WTC11 (cell line): ENCODE measurements at regions of chr3 and their contacts with region 1.

Region 1: DNA sequence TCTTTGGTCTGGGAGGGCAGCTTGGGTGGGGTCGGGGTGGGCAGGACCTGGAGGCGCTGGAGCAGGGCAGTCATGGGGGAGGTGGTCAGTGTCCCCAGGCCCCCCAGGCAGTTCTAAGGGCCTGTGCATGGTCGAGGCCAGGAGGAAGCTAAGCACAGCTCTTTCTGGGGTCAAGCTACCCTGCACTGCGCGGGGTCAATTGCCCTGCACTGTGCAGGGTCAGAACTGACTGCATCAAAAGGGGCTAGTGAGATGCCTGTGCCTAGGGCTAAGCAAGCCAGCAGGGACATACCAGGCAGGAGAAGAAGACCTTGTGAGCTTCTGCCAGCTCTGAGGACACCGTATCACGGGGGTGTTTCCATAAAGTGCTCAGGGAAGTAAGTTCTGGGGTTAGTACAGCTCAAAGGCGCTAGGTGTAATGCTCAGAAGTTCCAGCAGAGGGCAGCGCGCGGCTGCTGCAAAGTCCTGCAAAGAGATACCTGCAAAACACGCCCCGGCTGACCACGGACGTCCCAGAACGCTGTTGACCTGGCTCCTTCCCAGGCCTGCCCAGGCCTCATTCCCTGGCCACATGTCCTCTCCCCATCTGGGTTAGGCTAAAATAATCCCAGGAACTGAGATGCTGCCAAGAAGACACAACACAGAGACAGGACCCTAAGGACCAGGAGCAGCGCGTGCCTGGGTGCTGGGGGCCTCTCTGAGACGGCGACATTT is 18.8 kb upstream of the IQSEC1 start:
- DNase-seq: peak; percentile 92
- ATAC-seq: peak; percentile 84
- H3K4me3 Mint-ChIP-seq: no peak overlapping the region
- H3K27ac Mint-ChIP-seq: no peak overlapping the region
- H3K4me1 Mint-ChIP-seq: peaks cover 21% of the 10 kb centered on the region
- H3K27me3 Mint-ChIP-seq: no peaks in the 10 kb centered on the region
- CTCF ChIP-seq: peak; percentile 99

Region 2: DNA sequence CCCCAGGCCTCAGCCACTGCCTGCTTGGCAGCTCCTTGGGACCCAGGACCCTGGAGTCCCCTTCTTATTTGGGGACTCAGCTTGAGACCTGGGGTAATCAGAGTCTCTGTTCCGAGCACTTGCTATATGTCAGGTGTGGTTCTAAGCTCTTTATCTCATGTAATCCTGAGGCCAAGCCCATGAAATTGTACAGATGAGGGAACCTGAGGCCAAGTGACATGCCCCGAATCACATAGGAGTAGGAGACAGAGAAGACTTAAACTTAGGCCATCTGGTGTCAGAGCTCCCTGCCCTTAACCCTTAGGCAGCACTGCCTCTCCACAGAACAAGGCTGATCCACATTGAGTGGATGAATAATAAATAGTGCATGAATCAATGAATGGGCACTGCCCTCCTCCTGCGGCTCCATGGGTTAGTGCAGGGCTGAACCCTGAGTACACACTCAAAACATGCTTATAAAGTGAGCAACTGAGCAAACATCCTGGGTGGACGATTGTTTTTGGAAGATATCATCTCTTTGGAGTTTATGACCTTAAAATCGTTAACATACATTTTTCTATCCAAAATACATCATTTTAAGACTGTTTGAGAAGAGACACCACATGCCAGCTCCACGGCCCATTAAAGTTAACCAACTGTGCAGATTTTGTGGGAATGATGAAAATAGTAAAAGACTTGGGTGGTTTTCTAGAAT is 14.4 kb after region 1 on chr3:
- CTCF ChIA-PET with region 1: interaction called, 37 read pairs
- POLR2A ChIA-PET with region 1: no interaction called
- DNase-seq: no peak
- ATAC-seq: no peak
- H3K4me3 Mint-ChIP-seq: no peak overlapping the region
- H3K27ac Mint-ChIP-seq: no peak overlapping the region
- H3K4me1 Mint-ChIP-seq: 0 out of 2 replicates have a peak, but pooled peaks cover 6% of the 10 kb centered on the region
- H3K27me3 Mint-ChIP-seq: no peaks in the 10 kb centered on the region
- CTCF ChIP-seq: no peak

Region 3: GRCh38 chr3:13141991-13142412 is 49.9 kb after region 1 on chr3:
- CTCF ChIA-PET with region 1: interaction called, 22 read pairs
- POLR2A ChIA-PET with region 1: no interaction called
- DNase-seq: peak; percentile 84
- ATAC-seq: peak; percentile 92
- H3K4me3 Mint-ChIP-seq: no peak overlapping the region
- H3K27ac Mint-ChIP-seq: no peak overlapping the region
- H3K4me1 Mint-ChIP-seq: peaks cover 6% of the 10 kb centered on the region
- H3K27me3 Mint-ChIP-seq: no peaks in the 10 kb centered on the region
- CTCF ChIP-seq: no peak

Region 4: GRCh38 chr3:13229273-13229949 is 137.4 kb after region 1 on chr3:
- CTCF ChIA-PET with region 1: interaction called, 27 read pairs
- POLR2A ChIA-PET with region 1: no interaction called
- DNase-seq: peak; percentile 65
- ATAC-seq: peak; percentile 99
- H3K4me3 Mint-ChIP-seq: no peak overlapping the region
- H3K27ac Mint-ChIP-seq: no peak overlapping the region
- H3K4me1 Mint-ChIP-seq: peaks cover 24% of the 10 kb centered on the region
- H3K27me3 Mint-ChIP-seq: no peaks in the 10 kb centered on the region
- CTCF ChIP-seq: peak; percentile 20; the same call in 1 of the 2 replicates

Region 5: DNA sequence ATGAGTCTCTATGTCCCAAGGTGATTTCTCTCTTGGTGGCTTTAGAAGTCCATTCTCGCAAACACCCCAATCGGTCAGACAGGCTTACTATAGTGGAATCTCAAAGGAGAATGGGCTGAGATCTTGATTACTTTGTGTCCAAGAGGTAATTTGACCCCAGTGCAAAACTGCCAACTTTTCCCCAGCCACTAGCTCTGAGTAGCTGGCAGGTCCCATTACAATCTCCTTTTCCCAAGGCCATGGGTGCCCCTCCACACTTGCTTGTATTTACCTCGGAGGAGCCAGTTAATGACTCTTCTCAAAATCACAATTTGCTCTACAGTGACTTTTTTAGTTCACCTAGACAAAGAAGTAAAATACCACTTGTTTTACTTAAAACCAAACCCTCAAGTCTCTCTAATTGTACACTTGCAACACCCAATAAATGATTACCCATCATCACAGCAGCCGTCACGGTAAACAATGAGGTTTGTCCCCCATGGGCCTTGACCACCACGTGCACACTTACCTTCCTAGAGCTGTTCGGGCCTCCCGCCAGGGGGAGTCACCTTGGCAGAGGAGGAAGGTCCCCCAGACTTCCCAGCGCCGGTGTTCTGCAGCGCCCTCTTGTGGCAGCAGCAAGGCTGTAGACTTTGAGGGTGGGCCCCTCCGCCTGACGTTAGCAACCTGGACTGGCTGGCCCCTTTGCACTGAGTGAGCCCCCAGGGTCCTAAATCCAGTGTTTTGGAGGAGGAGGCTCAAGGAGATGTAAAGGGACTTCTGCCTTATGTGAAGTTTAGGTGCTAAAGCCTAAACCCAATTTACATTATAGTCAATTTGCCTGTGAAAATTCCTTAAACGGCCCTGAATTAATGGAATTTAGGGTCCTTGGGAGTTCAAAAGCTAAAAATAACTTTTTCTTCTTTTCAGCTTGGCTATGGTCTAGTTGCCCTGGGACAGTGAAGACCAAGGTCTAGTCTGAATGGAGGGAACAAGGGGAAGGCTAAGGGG is 369.4 kb after region 1 on chr3:
- CTCF ChIA-PET with region 1: interaction called, 13 read pairs
- POLR2A ChIA-PET with region 1: no interaction called
- DNase-seq: peak; percentile 93
- ATAC-seq: peak; percentile 98
- H3K4me3 Mint-ChIP-seq: no peak overlapping the region
- H3K27ac Mint-ChIP-seq: 0 out of 2 replicates have a peak overlapping the region, but pooled peaks have one; percentile 41
- H3K4me1 Mint-ChIP-seq: peaks cover 14% of the 10 kb centered on the region
- H3K27me3 Mint-ChIP-seq: peaks cover 35% of the 10 kb centered on the region
- CTCF ChIP-seq: peak; percentile 94